Psoas muscle (tissue), 8 donors: ENCODE measurements at regions of chr10 and their contacts with region 1.

Region 1: GRCh38 chr10:47024399-47025252 is 113.4 kb downstream of the PTPN20 start:
- DNase-seq: peak; percentile 53 to 77
- ATAC-seq: peak; percentile 76 to 89 (median 82)
- H3K4me3 ChIP-seq: no peak overlapping the region
- H3K27ac ChIP-seq: no peak overlapping the region
- H3K4me1 ChIP-seq: no peaks in the 10 kb centered on the region
- H3K27me3 ChIP-seq: no peaks in the 10 kb centered on the region
- CTCF ChIP-seq: peak; percentile 72

Region 2: DNA sequence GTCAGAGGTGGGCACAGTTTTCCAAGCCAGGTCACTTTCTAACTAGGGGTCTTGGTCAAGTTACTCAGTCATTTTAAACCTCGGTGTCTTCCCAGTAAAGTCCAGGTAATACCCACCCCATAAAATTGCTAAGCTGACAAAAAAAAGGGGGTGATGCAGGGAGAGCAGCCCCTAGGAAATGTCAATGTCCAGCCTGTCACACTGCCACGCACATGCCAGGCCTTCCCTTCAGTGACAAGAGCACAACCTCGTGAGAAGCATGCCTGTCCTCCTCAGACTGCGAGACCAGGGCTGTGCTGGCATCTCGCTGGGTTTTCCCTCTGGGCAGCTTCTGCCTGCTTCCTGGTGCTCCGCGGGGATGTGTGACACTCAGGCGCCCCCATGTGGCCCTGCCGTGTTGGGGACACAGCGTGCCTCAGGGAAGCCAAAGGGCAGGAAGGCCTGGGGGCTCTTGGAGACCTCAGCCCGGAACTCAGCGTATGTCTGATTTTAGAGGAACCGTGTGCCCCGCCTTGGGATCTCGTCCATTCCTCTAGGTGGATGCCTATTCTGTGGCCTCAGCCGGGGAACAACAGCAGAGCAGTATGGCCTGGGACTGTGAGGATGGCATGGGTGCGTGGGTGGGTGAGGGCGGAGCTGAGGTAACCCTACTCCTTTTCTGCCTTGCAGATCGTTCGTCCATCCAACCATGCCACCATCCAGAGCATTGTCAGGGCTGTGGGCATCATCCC is 287.5 kb after region 1 on chr10:
- intact Hi-C with region 1: loop called (anchors 2 to 5 kb)
- DNase-seq: peak; percentile 83 to 90
- ATAC-seq: peak; percentile 91 to 99 (median 93)
- H3K4me3 ChIP-seq: no peak overlapping the region
- H3K27ac ChIP-seq: no peak overlapping the region
- H3K4me1 ChIP-seq: no peaks in the 10 kb centered on the region
- H3K27me3 ChIP-seq: peaks cover 0 to 5% (median 0%) of the 10 kb centered on the region in 3 donors
- CTCF ChIP-seq: peak; percentile 81